Activated naive CD4-positive, alpha-beta T cell treated with anti-CD3 and anti-CD28 coated beads for 36 hours (primary cell): ENCODE measurements at regions of chr14 and their contacts with region 1.

Region 1: GRCh38 chr14:34629657-34630529 is at the start of gene SNX6:
- DNase-seq: peak; percentile 85
- H3K4me3 Mint-ChIP-seq: peak within 1 kb of the TSS; percentile 93
- H3K27ac Mint-ChIP-seq: peak within 1 kb of the TSS; percentile 89
- H3K4me1 Mint-ChIP-seq: peaks cover 20% of the 10 kb centered on the region
- H3K27me3 Mint-ChIP-seq: no peaks in the 10 kb centered on the region
- total RNA-seq, gene SNX6: 73.9 to 74.3 TPM

Region 2: DNA sequence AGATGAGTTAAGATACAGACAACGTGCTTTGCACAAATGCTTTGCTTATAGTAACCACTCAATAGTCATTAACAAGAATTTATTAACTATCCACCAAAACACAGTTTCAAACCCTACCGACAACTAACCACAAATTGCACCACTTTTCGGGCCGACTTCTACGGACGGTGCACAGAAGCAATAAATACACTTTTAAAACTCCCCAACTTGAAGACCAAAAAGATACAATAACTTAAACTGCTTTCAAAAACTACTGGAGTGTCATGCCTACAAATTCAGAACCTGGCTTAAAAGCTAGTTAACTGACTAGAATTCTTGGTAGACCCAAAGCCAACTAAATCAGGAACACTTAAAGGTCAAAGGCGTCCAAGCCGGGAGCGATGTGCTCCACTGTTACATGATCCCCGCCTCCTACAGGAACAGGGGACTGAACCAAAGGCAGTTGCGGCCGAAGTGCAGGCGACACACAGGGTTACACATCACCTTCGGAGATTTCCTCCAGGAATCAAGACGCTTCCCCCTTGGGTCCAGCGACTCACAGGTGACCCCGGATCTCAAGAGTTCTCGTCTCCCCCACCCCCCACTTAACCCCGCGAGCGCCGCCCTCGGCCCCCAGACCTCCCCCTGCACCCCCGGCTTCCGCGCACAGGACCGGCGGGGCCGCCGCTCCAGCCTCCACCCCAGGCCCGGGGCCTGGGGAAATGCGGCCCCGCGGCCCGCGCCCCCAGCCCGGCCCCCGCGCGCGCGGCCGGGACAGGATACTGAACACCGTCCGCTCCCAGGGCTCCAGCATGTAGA is 168.4 kb before region 1 on chr14:
- CTCF ChIA-PET with region 1: no interaction called
- intact Hi-C with region 1: loop called (anchors 1 kb)
- DNase-seq: peak; percentile 41
- H3K4me3 Mint-ChIP-seq: peak overlapping the region; percentile 87
- H3K27ac Mint-ChIP-seq: peak overlapping the region; percentile 65
- H3K4me1 Mint-ChIP-seq: peaks cover 16% of the 10 kb centered on the region
- H3K27me3 Mint-ChIP-seq: no peaks in the 10 kb centered on the region

Region 3: GRCh38 chr14:34539407-34540180 is 90.3 kb before region 1 on chr14 and contains the start of gene EAPP:
- CTCF ChIA-PET with region 1: no interaction called
- intact Hi-C with region 1: loop called (anchors 5 kb)
- DNase-seq: peak; percentile 98
- H3K4me3 Mint-ChIP-seq: peak within 1 kb of the TSS; percentile 95
- H3K27ac Mint-ChIP-seq: peak within 1 kb of the TSS; percentile 98
- H3K4me1 Mint-ChIP-seq: peaks cover 32% of the 10 kb centered on the region
- H3K27me3 Mint-ChIP-seq: no peaks in the 10 kb centered on the region
- total RNA-seq, gene EAPP: 34.0 to 35.4 TPM

Region 4: DNA sequence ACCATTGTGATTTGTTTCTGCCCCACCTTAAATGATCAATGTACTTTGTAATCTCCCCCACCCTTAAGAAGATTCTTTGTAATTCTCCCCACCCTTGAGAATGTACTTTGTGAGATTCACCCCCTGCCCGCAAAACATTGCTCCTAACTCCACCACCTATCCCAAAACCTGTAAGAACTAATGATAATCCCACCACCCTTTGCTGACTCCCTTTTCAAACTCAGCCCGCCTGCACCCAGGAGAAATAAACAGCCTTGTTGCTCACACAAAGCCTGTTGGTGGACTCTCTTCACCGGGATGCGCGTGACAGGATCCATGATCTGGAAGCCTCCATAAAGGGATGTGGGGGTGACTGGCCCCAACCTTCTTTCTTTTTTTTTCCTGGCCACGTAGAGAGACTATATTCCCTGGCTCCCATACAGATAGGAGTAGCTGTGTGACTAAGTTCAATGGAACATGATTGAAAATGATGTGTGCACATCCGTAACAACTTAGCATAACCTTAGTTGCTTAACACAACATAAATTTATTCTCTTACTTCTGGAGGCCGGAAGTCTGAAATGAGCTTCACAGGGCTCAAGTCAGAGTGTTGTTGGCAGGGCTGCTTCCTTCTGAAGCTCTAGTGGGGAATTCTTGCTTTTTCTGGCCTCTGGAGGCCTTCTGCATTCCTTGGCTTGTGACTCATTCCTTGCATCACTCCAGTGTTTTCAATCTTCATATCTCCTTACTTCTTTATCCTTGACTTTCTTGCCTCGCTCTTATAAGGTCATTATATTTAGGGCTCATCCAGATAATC is 20.7 kb after region 1 on chr14:
- CTCF ChIA-PET with region 1: no interaction called
- intact Hi-C with region 1: no loop called
- DNase-seq: no peak
- H3K4me3 Mint-ChIP-seq: no peak overlapping the region
- H3K27ac Mint-ChIP-seq: no peak overlapping the region
- H3K4me1 Mint-ChIP-seq: no peaks in the 10 kb centered on the region
- H3K27me3 Mint-ChIP-seq: no peaks in the 10 kb centered on the region

Region 5: GRCh38 chr14:34714320-34715126 is 84.6 kb after region 1 on chr14 and contains the start of gene CFL2:
- CTCF ChIA-PET with region 1: no interaction called
- intact Hi-C with region 1: loop called (anchors 1 kb)
- DNase-seq: peak; percentile 75
- H3K4me3 Mint-ChIP-seq: peak within 1 kb of the TSS; percentile 81
- H3K27ac Mint-ChIP-seq: peak within 1 kb of the TSS; percentile 82
- H3K4me1 Mint-ChIP-seq: peaks cover 18% of the 10 kb centered on the region
- H3K27me3 Mint-ChIP-seq: no peaks in the 10 kb centered on the region
- total RNA-seq, gene CFL2: 3.1 to 4.5 TPM

Region 6: GRCh38 chr14:34750670-34751069 is 120.8 kb after region 1 on chr14:
- CTCF ChIA-PET with region 1: no interaction called
- intact Hi-C with region 1: no loop called
- DNase-seq: no peak
- H3K4me3 Mint-ChIP-seq: no peak overlapping the region
- H3K27ac Mint-ChIP-seq: no peak overlapping the region
- H3K4me1 Mint-ChIP-seq: no peaks in the 10 kb centered on the region
- H3K27me3 Mint-ChIP-seq: no peaks in the 10 kb centered on the region

Region 7: DNA sequence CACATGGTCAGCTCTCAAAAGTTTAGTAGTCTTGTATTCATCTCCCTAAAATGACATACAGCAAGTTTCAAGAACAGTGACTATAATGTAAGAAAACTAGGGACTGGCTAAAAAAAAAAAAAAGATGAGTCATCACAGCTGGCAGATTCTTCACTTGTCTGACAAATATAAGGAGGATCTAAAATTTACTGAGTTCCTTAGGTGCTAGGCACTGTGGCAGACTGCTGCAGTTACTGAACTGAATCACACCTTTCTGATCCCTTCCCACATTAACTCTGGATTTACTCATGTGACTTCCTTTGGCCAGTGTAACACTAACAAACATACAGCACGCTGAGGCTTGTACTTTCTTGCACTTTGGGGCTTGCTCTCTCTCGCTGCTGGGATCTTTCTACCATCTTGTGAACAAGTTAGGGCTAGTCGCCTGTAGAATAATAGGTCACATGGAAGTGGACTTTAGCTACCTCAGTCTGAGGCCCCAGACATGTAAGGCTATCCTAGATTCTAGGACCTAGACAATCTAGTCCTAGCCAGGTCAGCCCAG is 213.2 kb after region 1 on chr14:
- CTCF ChIA-PET with region 1: no interaction called
- intact Hi-C with region 1: loop called (anchors 1 kb)
- DNase-seq: peak; percentile 59
- H3K4me3 Mint-ChIP-seq: no peak overlapping the region
- H3K27ac Mint-ChIP-seq: peak overlapping the region; percentile 89
- H3K4me1 Mint-ChIP-seq: peaks cover 30% of the 10 kb centered on the region
- H3K27me3 Mint-ChIP-seq: no peaks in the 10 kb centered on the region

Region 8: DNA sequence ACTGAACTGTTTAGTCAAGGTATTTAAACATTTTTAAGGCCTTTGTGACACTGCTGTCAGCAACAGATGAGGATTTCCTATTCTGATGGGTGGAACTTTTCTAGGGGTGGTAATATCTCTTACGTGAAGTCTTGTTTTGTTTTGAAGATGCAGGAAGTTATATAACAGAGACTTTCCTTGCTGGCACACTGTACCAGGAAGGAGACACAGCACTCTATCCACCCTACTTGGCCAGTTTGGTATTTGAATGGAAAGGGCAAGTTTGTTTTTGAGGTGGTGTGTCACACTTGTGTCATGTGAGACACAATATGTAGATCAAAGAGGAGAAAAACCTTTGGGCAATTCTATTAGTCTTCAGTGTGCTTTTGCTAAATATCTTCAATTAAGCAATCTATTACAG is 301.3 kb after region 1 on chr14:
- CTCF ChIA-PET with region 1: no interaction called
- intact Hi-C with region 1: loop called (anchors 5 kb)
- DNase-seq: peak; percentile 56
- H3K4me3 Mint-ChIP-seq: peak overlapping the region; percentile 64
- H3K27ac Mint-ChIP-seq: peak overlapping the region; percentile 93
- H3K4me1 Mint-ChIP-seq: peaks cover 49% of the 10 kb centered on the region
- H3K27me3 Mint-ChIP-seq: no peaks in the 10 kb centered on the region